Caco-2 (cell line): ENCODE measurements at regions of chr15 and their contacts with region 1.

Region 1: GRCh38 chr15:70825841-70826240 is 28.1 kb downstream of the LARP6 start:
- DNase-seq: no peak
- H3K4me3 ChIP-seq: no peak overlapping the region
- H3K4me3 Mint-ChIP-seq: no peak overlapping the region
- H3K27ac Mint-ChIP-seq: no peak overlapping the region
- H3K4me1 ChIP-seq: peaks cover 24% of the 10 kb centered on the region
- H3K4me1 Mint-ChIP-seq: peaks cover 24% of the 10 kb centered on the region
- H3K27me3 ChIP-seq: no peaks in the 10 kb centered on the region
- H3K27me3 Mint-ChIP-seq: no peaks in the 10 kb centered on the region
- CTCF ChIP-seq: no peak

Region 2: GRCh38 chr15:70584838-70585706 is 240.8 kb before region 1 on chr15:
- CTCF ChIA-PET with region 1: no interaction called
- POLR2A ChIA-PET with region 1: no interaction called
- intact Hi-C with region 1: no loop called
- DNase-seq: peak; percentile 84 to 93
- H3K4me3 ChIP-seq: peak overlapping the region; percentile 38
- H3K4me3 Mint-ChIP-seq: peak overlapping the region; percentile 74
- H3K27ac Mint-ChIP-seq: peak overlapping the region; percentile 92
- H3K4me1 ChIP-seq: peaks cover 17% of the 10 kb centered on the region
- H3K4me1 Mint-ChIP-seq: peaks cover 12% of the 10 kb centered on the region
- H3K27me3 ChIP-seq: no peaks in the 10 kb centered on the region
- H3K27me3 Mint-ChIP-seq: no peaks in the 10 kb centered on the region
- CTCF ChIP-seq: peak; percentile 53 to 76

Region 3: DNA sequence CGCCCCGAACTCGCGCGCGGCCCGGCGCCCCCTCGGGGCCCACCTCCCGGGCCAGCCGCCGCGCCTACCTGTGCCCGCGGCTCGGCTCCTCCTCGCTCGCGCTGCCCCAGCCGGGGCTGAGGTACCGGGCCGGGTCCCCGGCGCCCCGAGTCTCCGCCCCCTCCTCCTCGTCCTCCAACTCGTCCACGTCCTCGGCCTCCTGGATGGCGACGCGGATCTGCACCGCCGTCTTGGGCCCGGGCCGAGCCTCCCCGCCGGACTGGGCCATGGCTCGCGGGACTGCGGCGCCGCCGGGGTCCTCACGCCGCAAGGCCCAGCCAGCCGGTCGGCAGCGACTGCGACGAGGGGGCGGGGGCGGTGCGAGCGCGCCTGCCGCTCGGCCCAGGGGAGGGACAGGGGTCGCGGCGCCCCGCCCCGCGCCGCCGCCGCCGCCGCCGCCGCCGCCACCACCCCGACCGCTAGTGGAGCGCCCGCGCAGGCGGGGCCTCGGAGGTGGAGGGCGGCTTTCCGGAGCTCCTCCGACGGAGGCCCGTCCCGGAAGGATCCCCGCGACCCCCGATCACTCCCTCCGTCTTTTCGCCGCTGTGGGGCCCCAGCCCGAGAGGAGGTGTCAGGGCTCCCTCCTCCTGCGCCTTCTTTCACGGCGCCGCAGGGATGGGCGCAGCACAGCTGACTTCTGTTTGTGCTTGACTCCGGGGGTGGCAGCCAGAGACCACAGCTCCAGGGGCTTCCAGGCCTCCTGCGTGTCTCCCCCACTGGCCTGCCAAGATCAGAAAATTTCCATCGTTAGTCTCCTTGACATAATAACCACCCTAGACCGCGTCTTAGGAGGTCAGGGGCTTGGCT is 28.2 kb after region 1 on chr15 and contains the start of gene LARP6:
- CTCF ChIA-PET with region 1: interaction called, 3 read pairs
- POLR2A ChIA-PET with region 1: no interaction called
- intact Hi-C with region 1: loop called (anchors 1 kb)
- DNase-seq: peak; percentile 58 to 80
- H3K4me3 ChIP-seq: peak within 1 kb of the TSS; percentile 81
- H3K4me3 Mint-ChIP-seq: peak within 1 kb of the TSS; percentile 94
- H3K27ac Mint-ChIP-seq: peak within 1 kb of the TSS; percentile 76
- H3K4me1 ChIP-seq: no peaks in the 10 kb centered on the region
- H3K4me1 Mint-ChIP-seq: peaks cover 9% of the 10 kb centered on the region
- H3K27me3 ChIP-seq: no peaks in the 10 kb centered on the region; the same call in 1 of the 2 replicates
- H3K27me3 Mint-ChIP-seq: no peaks in the 10 kb centered on the region
- CTCF ChIP-seq: no peak
- total RNA-seq, gene LARP6: 19.7 and 19.8 TPM in 2 replicates

Region 4: DNA sequence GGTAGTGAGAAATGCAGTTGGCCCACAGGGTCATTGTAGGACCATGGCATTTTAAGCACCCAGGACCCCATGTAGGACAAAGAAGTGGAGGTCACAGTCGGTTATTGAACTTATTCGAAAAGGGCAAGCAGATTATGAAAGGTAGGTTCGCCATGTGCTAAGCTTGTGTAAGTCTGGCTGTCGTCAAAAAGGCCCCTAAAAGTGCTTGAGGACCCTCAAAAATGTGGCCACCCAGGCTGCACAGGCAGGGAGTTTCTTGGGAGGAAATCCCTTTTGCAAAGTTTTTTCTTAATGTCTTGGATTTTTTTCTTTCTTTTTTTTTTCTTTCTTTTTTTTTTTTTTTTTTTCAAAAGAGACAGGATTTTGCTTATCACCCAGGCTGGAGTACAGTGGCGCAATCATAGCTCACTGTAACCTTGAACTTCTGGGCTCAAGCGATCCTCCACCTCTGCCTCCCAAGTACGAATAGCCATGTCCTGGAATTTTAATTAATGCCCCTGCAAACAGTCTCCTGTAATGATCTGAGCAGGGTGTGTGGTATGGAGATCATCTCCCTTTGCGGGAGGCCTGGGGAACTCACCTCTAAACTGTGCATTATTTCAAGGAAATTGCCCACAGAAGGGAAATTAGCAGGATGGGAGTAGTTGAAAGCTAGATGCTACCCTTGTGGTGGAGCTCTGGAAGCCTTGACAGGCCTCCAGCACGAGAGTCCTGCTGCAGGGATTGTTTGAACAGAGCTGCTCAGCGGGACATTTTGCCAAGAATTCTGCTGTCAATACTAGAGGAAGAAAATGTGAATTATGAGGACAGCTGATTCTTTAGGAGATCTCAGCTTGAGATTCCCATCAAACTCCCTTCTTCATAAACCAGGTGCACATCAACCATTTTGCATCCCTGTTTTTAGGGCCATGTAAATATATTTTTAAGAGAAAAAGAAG is 317.8 kb after region 1 on chr15:
- CTCF ChIA-PET with region 1: no interaction called
- POLR2A ChIA-PET with region 1: no interaction called
- intact Hi-C with region 1: no loop called
- DNase-seq: no peak
- H3K4me3 ChIP-seq: no peak overlapping the region
- H3K4me3 Mint-ChIP-seq: no peak overlapping the region
- H3K27ac Mint-ChIP-seq: no peak overlapping the region
- H3K4me1 ChIP-seq: no peaks in the 10 kb centered on the region
- H3K4me1 Mint-ChIP-seq: no peaks in the 10 kb centered on the region
- H3K27me3 ChIP-seq: no peaks in the 10 kb centered on the region
- H3K27me3 Mint-ChIP-seq: peaks cover 24% of the 10 kb centered on the region
- CTCF ChIP-seq: no peak